Activated naive CD4-positive, alpha-beta T cell treated with anti-CD3 and anti-CD28 coated beads, Interleukin-2, amount 10 ng/mL, durations not matched to agents 7 days and 5 days (primary cell): ENCODE measurements at regions of chr17 and their contacts with region 1.

Region 1: GRCh38 chr17:52106638-52107261 is 51.8 kb downstream of the CA10 start:
- DNase-seq: peak; percentile 55
- H3K4me3 Mint-ChIP-seq: no peak overlapping the region
- H3K27ac Mint-ChIP-seq: no peak overlapping the region
- H3K4me1 Mint-ChIP-seq: no peaks in the 10 kb centered on the region
- H3K27me3 Mint-ChIP-seq: no peaks in the 10 kb centered on the region

Region 2: GRCh38 chr17:51764387-51764972 is 342.3 kb before region 1 on chr17:
- CTCF ChIA-PET with region 1: interaction called, 21 read pairs
- DNase-seq: peak; percentile 56
- H3K4me3 Mint-ChIP-seq: no peak overlapping the region
- H3K27ac Mint-ChIP-seq: no peak overlapping the region
- H3K4me1 Mint-ChIP-seq: no peaks in the 10 kb centered on the region
- H3K27me3 Mint-ChIP-seq: peaks cover 8% of the 10 kb centered on the region

Region 3: GRCh38 chr17:52024300-52024870 is 82.4 kb before region 1 on chr17:
- CTCF ChIA-PET with region 1: no interaction called
- DNase-seq: no peak
- H3K4me3 Mint-ChIP-seq: no peak overlapping the region
- H3K27ac Mint-ChIP-seq: no peak overlapping the region
- H3K4me1 Mint-ChIP-seq: no peaks in the 10 kb centered on the region
- H3K27me3 Mint-ChIP-seq: no peaks in the 10 kb centered on the region